Activated CD8-positive, alpha-beta T cell treated with anti-CD3 and anti-CD28 coated beads, Interleukin-2, amount 10 ng/mL, durations not matched to agents 7 days and 5 days (primary cell): ENCODE measurements at regions of chr2 and their contacts with region 1.

Region 1: DNA sequence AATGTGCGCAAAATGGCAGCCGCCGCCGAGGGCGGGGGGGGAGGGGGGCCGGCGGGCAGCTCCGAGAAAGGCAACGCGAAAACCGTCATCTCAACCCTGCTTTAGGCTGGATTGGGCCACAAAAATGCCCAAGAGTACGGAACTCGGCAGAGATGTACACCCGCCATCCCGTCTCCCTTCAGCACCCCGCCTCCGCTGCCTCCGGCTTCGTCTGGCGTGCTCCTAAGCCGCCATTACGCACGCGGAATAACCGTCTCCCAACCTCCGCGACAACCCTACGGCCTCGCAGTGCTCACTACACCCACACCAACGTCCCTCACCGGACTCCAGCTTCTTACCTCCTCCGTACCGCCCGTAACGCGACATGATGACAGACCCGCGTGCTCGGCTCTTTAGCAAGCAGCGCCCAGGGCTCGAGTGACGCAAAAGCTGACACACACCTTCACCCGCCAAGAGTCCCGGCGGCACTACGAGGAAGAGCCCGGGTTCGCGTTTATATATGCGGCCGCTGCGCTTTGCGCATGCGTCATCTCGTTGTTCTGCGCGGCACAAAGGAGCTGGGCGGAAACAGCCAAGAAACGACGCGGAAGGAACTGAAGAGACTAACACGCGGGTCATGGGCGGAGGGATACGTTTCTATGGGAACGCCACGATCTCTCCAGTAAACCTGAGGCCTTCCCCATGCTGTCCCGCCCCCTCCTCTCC is at the start of gene SRSF7:
- DNase-seq: peak; percentile 98
- ATAC-seq: peak; percentile 79
- H3K4me3 Mint-ChIP-seq: peak within 1 kb of the TSS; percentile 93
- H3K27ac Mint-ChIP-seq: peak within 1 kb of the TSS; percentile 98
- H3K4me1 Mint-ChIP-seq: peaks cover 49% of the 10 kb centered on the region
- H3K27me3 Mint-ChIP-seq: no peaks in the 10 kb centered on the region
- total RNA-seq, gene SRSF7: 348 to 356 TPM

Region 2: DNA sequence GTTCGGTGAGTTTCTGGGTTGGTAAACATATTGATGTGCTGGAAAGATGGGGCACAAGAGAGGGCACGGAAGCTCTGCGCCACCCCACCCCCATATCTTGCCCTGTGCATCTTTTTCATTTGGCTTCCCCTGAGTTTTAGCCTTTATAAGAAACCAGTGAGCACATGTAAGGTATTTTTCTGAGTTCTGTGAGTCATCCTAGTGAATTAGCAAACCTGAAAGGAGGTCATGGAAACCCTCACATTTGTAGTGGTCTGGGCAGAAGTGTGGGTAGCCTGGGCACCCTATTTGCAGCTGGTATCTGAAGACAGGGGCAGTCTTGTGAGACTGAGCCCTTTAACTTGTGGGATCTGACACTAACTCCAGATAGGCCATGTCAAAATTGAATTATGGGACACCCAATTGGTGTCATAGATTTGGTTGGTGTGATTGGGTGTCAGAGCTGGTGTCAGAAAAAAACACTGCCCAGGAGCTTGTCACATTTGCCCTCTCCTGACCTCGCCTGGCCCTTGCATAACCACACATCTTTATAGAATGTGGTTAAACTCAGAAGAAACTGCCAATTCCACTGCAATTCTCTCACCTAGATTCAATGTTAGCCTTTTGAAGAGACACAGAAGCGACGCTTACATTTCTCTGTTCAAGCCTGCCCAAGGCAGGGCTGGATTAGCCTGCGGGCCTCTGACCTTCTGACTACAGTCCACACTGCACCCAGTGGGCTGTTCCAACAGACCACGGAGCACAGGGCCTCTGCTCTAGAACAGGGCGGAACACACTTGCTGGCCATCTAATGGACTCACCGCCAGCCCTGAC is 97.1 kb before region 1 on chr2:
- CTCF ChIA-PET with region 1: no interaction called
- POLR2A ChIA-PET with region 1: interaction called, 22 read pairs
- DNase-seq: peak; percentile 58
- ATAC-seq: peak; percentile 61
- H3K4me3 Mint-ChIP-seq: peak overlapping the region; percentile 52
- H3K27ac Mint-ChIP-seq: peak overlapping the region; percentile 92
- H3K4me1 Mint-ChIP-seq: peaks cover 61% of the 10 kb centered on the region
- H3K27me3 Mint-ChIP-seq: no peaks in the 10 kb centered on the region

Region 3: DNA sequence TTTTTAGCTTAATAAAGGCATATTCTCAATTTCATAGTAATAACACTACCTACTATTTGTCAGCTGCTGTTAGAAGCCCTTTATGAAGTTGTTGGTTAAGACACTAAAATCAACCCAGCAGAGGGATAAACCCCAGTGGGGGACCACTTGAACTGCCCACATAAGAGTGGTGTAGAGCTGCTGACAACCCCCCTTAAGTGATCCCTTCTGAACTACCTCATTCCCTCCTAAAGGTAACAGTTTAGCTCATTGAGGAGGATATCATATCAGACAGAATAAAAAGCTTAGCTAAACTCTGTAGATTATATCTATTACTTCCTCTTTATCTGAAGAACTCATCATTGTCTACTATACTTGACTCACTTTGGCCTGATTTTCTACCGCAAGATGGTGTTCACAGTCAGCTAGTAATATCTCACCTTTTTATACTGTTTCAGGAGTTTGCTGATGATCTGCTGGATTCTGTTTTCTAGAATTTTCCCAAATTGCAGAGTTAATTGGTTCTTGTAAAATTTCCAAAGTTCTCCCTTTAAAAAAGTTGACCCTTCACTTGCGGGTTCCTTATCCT is 69.0 kb before region 1 on chr2:
- CTCF ChIA-PET with region 1: interaction called, 3 read pairs
- POLR2A ChIA-PET with region 1: interaction called, 10 read pairs
- DNase-seq: no peak
- ATAC-seq: peak; percentile 56
- H3K4me3 Mint-ChIP-seq: no peak overlapping the region
- H3K27ac Mint-ChIP-seq: peak overlapping the region; percentile 34
- H3K4me1 Mint-ChIP-seq: peaks cover 42% of the 10 kb centered on the region
- H3K27me3 Mint-ChIP-seq: no peaks in the 10 kb centered on the region

Region 4: DNA sequence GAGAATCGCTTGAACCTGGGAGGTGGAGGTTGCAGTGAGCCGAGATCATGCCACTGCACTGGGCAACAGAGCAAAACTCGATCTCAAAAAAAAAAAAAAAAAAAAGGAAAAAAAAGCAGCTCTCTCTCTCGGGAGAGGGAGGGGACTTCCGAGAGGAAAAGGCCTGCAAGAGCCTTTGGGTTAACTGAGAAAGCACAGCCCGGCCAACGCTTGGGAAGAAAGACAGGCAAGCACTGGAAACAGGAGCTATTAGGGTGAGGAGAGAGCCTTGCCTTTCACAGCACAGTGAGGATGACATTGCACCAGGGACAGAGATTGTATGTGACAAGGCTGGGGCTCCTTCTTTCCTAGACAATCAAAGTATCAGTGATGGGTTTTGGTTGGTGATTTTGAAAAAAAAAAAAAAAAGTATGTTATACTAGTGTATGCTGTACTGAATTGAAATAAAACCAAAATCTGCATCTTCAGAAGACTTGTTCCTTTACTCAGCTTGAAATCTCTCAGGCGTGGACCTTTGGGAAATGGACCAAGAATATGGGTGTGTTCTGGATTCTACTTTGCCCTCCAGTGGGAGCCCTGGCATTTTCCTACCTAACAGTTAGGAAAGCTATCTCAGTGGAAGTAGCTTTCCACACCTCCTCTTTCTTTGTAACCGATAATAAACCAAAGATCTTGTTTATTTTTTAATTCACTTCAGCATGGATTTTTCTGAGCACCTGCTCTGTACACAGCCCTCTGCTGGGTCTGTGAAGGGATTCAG is 16.6 kb before region 1 on chr2:
- CTCF ChIA-PET with region 1: no interaction called
- POLR2A ChIA-PET with region 1: interaction called, 36 read pairs
- DNase-seq: no peak
- ATAC-seq: no peak
- H3K4me3 Mint-ChIP-seq: no peak overlapping the region
- H3K27ac Mint-ChIP-seq: no peak overlapping the region
- H3K4me1 Mint-ChIP-seq: peaks cover 3% of the 10 kb centered on the region
- H3K27me3 Mint-ChIP-seq: no peaks in the 10 kb centered on the region

Region 5: GRCh38 chr2:38771632-38772031 is 20.6 kb after region 1 on chr2:
- CTCF ChIA-PET with region 1: no interaction called
- POLR2A ChIA-PET with region 1: interaction called, 35 read pairs
- DNase-seq: no peak
- ATAC-seq: no peak
- H3K4me3 Mint-ChIP-seq: no peak overlapping the region
- H3K27ac Mint-ChIP-seq: no peak overlapping the region
- H3K4me1 Mint-ChIP-seq: peaks cover 4% of the 10 kb centered on the region
- H3K27me3 Mint-ChIP-seq: peaks cover 16% of the 10 kb centered on the region

Region 6: DNA sequence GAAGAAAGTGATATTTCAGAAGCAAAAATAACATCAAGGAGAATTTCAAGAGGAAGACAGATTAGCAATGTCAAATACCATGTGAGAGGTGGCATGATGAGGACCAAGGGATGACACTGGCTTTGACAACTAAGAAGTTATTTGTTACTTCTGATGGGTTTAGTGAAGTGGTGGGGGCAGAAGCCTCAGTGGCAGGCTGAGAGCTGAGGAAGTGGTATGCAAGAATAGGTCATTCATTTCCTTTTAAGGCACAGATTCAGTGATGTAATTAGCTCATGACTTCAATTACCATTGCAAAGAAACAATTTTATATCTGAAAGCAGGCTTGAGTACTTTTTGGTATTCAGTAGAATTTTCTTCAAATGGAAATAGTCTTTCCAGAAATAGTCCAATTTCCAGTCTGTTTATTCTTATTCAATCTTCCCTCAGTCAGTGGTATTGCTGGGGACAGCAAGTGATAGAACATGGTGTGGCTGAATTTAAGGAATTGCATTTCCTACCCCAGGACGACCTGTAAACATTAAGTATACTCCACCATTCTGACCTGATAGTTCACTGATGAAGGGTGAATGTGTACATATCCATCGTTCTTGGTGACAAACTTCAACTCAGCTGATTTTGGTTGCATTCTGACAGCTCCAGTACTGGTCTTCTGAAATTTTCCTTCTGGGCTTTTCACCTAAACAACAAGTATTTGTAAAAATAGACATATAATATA is 55.1 kb after region 1 on chr2:
- CTCF ChIA-PET with region 1: no interaction called
- POLR2A ChIA-PET with region 1: interaction called, 34 read pairs
- DNase-seq: peak; percentile 61
- ATAC-seq: peak; percentile 81
- H3K4me3 Mint-ChIP-seq: no peak overlapping the region
- H3K27ac Mint-ChIP-seq: no peak overlapping the region
- H3K4me1 Mint-ChIP-seq: no peaks in the 10 kb centered on the region
- H3K27me3 Mint-ChIP-seq: no peaks in the 10 kb centered on the region